MCF 10A (cell line): ENCODE measurements at regions of chr5 and their contacts with region 1.

Region 1: GRCh38 chr5:68548959-68549687 is 333.6 kb downstream of the PIK3R1 start:
- DNase-seq: peak; percentile 92
- H3K4me3 Mint-ChIP-seq: no peak overlapping the region
- H3K27ac Mint-ChIP-seq: peak overlapping the region; percentile 4
- H3K4me1 Mint-ChIP-seq: peaks cover 24% of the 10 kb centered on the region
- H3K27me3 Mint-ChIP-seq: no peaks in the 10 kb centered on the region
- CTCF ChIP-seq: no peak

Region 2: GRCh38 chr5:68315679-68316271 is 233.3 kb before region 1 on chr5:
- CTCF ChIA-PET with region 1: no interaction called
- POLR2A ChIA-PET with region 1: no interaction called
- intact Hi-C with region 1: loop called (anchors 10 kb)
- DNase-seq: no peak
- H3K4me3 Mint-ChIP-seq: no peak overlapping the region
- H3K27ac Mint-ChIP-seq: no peak overlapping the region
- H3K4me1 Mint-ChIP-seq: peaks cover 13% of the 10 kb centered on the region
- H3K27me3 Mint-ChIP-seq: no peaks in the 10 kb centered on the region
- CTCF ChIP-seq: no peak